ENCODE measurements at regions of chr4 and their contacts with region 1.

Region 1: DNA sequence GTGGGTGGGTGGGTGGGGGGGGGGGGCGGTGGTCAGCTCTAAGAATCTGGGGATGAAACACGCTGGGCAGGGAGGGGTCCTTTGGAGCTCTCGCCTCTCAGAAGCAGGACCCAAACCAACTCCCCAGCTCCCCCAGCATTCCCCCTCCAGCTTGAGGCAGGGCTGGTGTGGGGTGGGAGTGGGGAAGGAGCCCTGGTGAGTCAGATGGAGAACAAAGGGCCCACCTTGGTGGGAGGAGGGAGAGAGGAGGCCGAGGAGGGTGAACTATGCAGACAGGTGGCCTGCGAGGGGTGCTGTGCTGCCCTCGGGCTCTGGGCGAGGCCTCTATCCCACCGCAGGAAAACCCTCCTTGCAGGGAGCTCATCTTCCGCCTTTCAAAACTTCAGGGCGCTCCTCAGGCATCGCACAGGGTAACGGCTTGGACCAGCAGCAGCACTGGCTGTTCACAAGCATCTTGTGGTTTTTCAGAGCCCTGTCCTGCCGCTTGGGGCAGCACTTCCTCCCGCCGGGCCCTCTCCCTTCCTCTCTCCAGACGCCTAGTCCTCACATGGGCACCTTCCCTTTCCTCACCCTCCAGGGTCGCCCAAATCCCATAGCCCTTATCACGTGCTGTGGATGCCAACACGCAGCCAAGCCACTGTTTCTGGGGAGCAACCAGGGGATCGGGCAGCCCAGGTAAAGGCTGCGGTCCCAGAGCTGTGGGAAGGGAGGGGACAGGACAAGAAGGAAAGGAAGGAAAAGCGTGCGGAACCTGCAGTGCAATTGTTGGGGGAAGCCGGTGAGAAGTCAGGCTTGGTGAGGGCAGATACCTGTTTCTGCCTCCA is 34.0 kb upstream of the GRPEL1 start:
- DNase-seq: peak; percentile 51 to 67
- ATAC-seq: peak; percentile 57 to 69
- H3K4me3 ChIP-seq: peak overlapping the region; percentile 69 to 87 (median 82)
- H3K27ac ChIP-seq: peak overlapping the region; percentile 83 to 94 (median 92)
- H3K4me1 ChIP-seq: peaks cover 11 to 16% of the 10 kb centered on the region in 2 donors
- H3K27me3 ChIP-seq: no peaks in the 10 kb centered on the region
- CTCF ChIP-seq: peak; percentile 44 to 76 (median 67)
- POLR2A ChIP-seq: no peak

Region 2: DNA sequence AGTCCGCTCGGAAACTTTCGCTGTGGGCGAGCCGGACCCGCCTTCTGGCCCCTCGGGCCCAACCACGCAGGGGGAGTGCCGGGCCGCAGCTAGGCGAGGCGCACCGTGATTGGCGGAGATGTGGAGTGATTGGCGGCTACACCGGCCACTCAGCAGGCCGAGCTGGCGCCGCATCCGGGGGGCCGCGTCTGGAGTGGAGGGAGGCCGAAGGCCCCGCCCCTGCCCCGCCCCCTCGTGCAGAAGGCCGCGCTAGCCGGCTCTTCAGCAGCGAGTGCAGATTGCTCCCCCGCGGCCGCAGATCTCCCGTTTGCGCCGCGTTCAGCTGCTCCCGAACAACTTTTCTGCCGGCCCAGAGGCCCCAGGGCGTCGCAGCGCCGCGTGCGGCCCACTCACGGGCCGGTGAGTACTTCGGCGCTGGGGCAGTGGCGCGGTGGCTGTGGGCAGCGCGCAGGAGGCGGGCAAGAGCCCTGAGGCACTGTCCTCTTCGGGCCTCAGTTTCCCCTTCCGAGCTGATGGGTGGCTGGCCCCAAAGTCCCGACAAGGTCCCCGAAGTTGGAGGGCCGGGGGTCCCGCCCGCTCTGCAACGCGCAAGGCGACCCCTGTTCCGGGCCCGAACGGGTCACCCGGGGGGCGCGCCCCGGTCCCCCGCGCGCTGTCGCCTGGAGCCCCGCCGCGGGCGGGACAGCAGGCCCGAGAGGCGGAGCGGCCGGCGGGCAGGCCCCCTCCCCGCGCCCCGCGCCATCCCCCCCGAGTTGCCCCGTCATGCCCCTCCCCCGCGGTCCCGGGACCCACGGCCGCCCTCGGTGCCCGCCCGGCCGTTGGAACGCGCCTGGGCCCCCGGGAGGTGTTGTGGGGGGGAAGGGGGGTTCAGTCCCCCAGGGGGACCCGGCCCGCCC is 832.0 kb before region 1 on chr4 and contains the start of gene WFS1:
- in situ Hi-C with region 1: no loop called
- intact Hi-C with region 1: loop called (anchors 10 kb)
- DNase-seq: peak; percentile 98 to 99
- ATAC-seq: peak; percentile 93 to 95
- H3K4me3 ChIP-seq: peak within 1 kb of the TSS; percentile 72 to 91 (median 84)
- H3K27ac ChIP-seq: peak within 1 kb of the TSS; percentile 60 to 82 (median 75)
- H3K4me1 ChIP-seq: peaks cover 28 to 35% of the 10 kb centered on the region in 2 donors
- H3K27me3 ChIP-seq: no peaks in the 10 kb centered on the region
- CTCF ChIP-seq: no peak
- POLR2A ChIP-seq: peak; percentile 64 to 73
- total RNA-seq, gene WFS1: 13.6 to 23.7 (median 15.6) TPM

Region 3: DNA sequence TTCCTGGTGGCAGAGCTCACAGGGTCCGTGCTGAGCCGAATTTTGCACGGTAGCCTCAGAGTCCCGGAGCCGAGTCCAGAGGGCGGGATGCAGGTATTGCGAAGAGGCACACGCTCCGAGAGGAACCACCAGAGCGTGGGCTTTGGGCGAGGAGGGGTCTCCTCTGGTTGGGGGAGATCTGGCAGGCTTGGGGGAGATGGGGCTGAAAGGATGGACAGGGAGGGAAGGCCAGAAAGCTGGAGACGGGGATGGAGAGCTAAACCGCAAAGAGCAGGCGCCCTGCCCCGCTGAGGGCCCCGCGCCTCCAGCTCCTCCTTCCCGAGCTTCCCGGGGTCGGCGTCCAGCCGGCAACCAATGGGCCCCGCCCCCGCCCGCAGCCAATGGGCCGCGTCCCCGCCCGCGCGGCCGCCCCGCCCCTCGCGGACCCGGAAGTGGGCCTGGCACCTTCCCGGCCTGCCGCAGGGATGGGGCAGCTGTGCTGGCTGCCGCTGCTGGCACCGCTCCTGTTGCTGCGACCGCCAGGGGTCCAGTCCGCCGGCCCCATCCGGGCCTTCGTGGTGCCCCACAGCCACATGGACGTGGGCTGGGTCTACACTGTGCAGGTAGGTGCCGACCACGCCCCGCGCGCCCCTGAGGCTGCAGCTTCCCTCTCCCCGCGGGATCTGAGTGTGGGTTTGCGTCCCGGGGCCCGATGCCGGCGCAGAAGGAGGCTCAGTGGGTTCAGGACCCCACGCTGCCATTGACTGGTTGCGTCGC is 527.0 kb before region 1 on chr4 and contains the start of gene MAN2B2:
- in situ Hi-C with region 1: no loop called
- intact Hi-C with region 1: loop called (anchors 10 kb)
- DNase-seq: peak; percentile 63 to 77
- ATAC-seq: peak; percentile 90 to 94
- H3K4me3 ChIP-seq: peak within 1 kb of the TSS; percentile 65 to 86 (median 79)
- H3K27ac ChIP-seq: peak within 1 kb of the TSS in 3 of 4 donors; percentile 45 to 61 (median 49)
- H3K4me1 ChIP-seq: peaks cover 9% of the 10 kb centered on the region in 2 donors
- H3K27me3 ChIP-seq: no peaks in the 10 kb centered on the region
- CTCF ChIP-seq: no peak
- POLR2A ChIP-seq: no peak
- total RNA-seq, gene MAN2B2: 3.3 to 5.6 (median 4.5) TPM

Region 4: DNA sequence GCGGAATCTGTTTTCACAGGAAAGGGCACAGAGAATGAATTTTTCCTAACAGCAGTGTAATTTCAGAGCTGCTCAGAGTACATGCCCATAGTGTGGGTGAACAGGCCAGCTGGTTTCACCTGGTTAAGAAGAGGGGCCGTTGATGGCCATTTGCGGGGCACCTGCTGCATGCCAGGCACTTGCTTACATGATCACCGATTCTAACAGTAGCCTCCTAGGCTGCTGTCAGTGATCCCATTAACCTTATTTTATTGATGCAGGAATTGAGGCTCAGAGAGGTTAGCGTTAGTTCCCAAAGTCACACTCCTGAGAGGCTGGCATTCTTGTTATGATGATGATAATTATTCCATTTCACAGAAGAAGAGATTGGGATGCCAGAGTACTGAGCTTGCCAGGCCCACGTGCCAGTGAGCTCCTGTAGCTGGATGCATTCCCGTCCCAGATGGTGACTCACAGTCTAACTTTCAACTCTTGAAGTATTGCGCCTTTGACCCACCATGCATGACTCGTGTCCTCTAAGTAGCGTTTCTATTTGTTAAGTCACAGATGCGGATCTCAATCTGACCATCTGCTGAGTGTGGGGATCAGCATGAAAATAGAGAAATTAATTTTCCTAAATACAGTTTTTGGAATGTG is 256.3 kb after region 1 on chr4:
- in situ Hi-C with region 1: no loop called
- intact Hi-C with region 1: no loop called
- DNase-seq: peak; percentile 61 to 71
- ATAC-seq: peak; percentile 98
- H3K4me3 ChIP-seq: no peak overlapping the region
- H3K27ac ChIP-seq: no peak overlapping the region
- H3K4me1 ChIP-seq: peaks cover 0 to 3% of the 10 kb centered on the region in 2 donors
- H3K27me3 ChIP-seq: no peaks in the 10 kb centered on the region
- CTCF ChIP-seq: no peak
- POLR2A ChIP-seq: no peak

Region 5: GRCh38 chr4:7827991-7828720 is 726.3 kb after region 1 on chr4:
- in situ Hi-C with region 1: no loop called
- intact Hi-C with region 1: no loop called
- DNase-seq: peak; percentile 67 to 71
- ATAC-seq: peak; percentile 47 to 76
- H3K4me3 ChIP-seq: peak overlapping the region in 2 of 4 donors; percentile 6 to 19
- H3K27ac ChIP-seq: peak overlapping the region; percentile 82 to 92 (median 85)
- H3K4me1 ChIP-seq: peaks cover 42 to 58% of the 10 kb centered on the region in 2 donors
- H3K27me3 ChIP-seq: no peaks in the 10 kb centered on the region
- CTCF ChIP-seq: no peak
- POLR2A ChIP-seq: no peak

Measured in gastrocnemius medialis (tissue), 4 donors.